Common myeloid progenitor, CD34-positive (primary cell): ENCODE measurements at regions of chr3 and their contacts with region 1.

Region 1: GRCh38 chr3:16529264-16529663 is 15.8 kb upstream of the RFTN1 start:
- DNase-seq: peak in 1 of 3 donors; percentile 36
- H3K4me3 ChIP-seq: no peak overlapping the region
- H3K27ac ChIP-seq: no peak overlapping the region
- H3K4me1 ChIP-seq: peaks cover 2 to 20% (median 11%) of the 10 kb centered on the region in 4 experiments
- H3K27me3 ChIP-seq: no peaks in the 10 kb centered on the region

Region 2: DNA sequence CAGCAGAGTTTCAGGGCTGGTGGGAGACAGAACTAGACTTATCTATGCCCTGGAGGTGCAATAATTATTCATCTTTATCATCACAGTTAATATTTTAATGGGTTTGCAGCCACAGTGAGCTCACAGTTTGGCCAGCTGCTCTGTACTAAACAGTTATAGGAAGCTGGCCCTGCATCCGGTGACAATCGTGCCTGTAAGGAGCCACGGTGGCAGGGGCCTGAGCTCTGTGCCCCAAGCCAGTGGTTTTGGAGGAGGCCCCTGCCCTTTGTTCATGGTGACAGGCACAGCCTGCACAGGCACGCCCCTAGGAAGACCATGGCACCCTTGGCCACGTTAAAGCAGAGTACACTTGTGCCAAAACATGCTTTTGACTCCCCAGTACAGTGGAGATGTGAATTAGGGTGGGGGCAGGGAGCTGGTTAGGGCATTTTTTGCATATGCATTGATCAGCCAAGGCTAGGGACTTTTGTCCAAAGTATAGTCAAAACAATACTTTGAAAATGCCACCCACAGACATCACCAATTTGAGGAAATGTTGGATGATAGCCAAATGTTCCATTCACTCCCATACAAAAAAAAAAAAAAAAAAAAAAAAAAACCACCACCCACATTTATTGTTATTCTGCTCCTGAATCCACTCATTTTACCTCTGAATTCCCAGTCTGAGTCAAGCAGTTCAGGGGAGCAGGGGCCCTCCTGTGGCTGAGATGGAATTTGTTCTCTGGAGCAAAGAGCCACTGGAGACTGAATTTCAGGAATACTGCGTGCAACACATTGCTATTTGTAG is 12.4 kb before region 1 on chr3:
- CTCF ChIA-PET with region 1: interaction called, 27 read pairs
- POLR2A ChIA-PET with region 1: interaction called, 3 read pairs
- DNase-seq: peak in 2 of 3 donors; percentile 88 to 91
- H3K4me3 ChIP-seq: peak overlapping the region in 2 of 7 experiments; percentile 19 to 26
- H3K27ac ChIP-seq: peak overlapping the region in 1 of 2 experiments; percentile 16
- H3K4me1 ChIP-seq: peaks cover 13 to 72% (median 64%) of the 10 kb centered on the region in 4 experiments
- H3K27me3 ChIP-seq: no peaks in the 10 kb centered on the region